ENCODE measurements at regions of chr5 and their contacts with region 1.

Region 1: GRCh38 chr5:148554621-148555020 is 99.7 kb downstream of the HTR4 start:
- DNase-seq: no peak
- ATAC-seq: no peak
- H3K4me3 ChIP-seq: no peak overlapping the region
- H3K27ac ChIP-seq: no peak overlapping the region
- H3K4me1 ChIP-seq: no peaks in the 10 kb centered on the region
- H3K27me3 ChIP-seq: peaks cover 81% of the 10 kb centered on the region
- CTCF ChIP-seq: no peak

Region 2: DNA sequence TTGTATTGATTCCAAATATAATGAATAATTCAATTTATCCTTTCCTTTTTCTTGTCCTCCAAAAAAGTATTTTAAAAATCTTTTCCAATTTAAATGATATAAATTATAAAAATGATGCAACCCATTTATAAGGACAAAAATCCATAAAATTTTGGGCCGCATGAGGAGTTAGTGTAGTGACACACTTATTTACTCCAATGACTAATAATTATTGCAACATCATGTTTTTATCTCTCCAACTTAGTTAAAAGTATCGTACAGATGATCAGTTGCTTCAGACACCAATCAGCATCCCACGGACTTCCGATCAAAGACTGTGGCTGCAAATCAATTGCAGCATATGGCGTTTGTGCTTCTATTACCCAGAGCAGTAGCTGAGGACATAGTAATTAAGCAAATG is 41.1 kb after region 1 on chr5:
- CTCF ChIA-PET with region 1: no interaction called
- POLR2A ChIA-PET with region 1: interaction called, 21 read pairs
- intact Hi-C with region 1: no loop called
- DNase-seq: peak; percentile 52
- ATAC-seq: no peak
- H3K4me3 ChIP-seq: no peak overlapping the region
- H3K27ac ChIP-seq: no peak overlapping the region
- H3K4me1 ChIP-seq: peaks cover 5% of the 10 kb centered on the region
- H3K27me3 ChIP-seq: peaks cover 45% of the 10 kb centered on the region
- CTCF ChIP-seq: no peak

Region 3: DNA sequence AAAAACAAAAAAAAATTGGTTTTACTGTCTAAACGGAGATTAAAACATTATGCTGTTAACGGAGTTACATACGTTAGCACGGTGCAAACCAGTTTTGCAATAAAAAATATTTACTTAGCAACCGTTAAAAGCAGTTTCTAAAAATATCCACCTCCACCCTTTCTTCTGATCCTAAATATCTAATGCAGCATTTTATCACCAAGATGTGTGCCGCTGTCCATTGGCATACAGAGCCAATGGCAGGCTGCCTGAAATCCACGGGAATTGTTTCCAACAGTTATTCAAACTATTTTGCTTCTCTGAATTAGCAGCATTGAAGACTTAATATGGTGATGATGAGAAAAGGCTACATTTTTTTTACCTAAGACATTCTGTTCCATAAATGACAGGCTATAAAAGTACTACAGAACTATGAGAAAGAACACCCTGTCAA is 935.0 kb after region 1 on chr5:
- CTCF ChIA-PET with region 1: no interaction called
- POLR2A ChIA-PET with region 1: no interaction called
- intact Hi-C with region 1: no loop called
- DNase-seq: peak; percentile 57
- ATAC-seq: no peak
- H3K4me3 ChIP-seq: no peak overlapping the region
- H3K27ac ChIP-seq: peak overlapping the region; percentile 94
- H3K4me1 ChIP-seq: peaks cover 88% of the 10 kb centered on the region
- H3K27me3 ChIP-seq: no peaks in the 10 kb centered on the region
- CTCF ChIP-seq: no peak